Sciatic nerve (tissue), 2 donors: ENCODE measurements at regions of chr5 and their contacts with region 1.

Region 1: DNA sequence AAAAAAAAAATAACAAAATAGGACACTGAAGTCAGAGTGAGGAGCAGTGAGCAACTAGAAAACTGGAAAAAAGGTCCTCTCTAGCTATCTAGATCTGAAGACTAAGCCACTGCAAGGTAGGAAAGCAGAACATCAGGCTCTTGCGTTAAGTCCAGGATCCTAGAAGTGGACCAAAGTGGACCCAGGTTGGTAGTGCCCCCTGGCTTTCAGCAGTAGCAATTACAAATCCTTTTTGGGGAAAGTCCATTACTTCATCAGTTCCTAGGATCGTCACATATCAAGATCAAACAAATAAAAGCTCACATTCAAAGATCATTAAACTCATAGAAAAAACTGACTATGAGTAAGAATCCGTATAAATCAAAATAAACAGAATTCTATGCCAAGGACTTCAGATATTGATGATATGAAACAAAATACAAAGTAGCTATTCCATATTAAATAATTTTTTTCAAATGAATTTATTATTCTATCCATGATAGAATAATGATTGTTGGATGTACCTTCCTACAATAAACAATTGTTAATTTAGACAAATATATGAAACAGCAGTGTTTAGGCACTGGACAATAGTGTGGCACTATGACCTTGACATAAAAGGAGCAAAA is 6.5 kb upstream of the RICTOR start:
- DNase-seq: no peak
- ATAC-seq: peak; percentile 88

Region 2: GRCh38 chr5:38184627-38185026 is 896.1 kb before region 1 on chr5:
- intact Hi-C with region 1: loop called (anchors 5 kb)
- DNase-seq: no peak
- ATAC-seq: no peak

Region 3: DNA sequence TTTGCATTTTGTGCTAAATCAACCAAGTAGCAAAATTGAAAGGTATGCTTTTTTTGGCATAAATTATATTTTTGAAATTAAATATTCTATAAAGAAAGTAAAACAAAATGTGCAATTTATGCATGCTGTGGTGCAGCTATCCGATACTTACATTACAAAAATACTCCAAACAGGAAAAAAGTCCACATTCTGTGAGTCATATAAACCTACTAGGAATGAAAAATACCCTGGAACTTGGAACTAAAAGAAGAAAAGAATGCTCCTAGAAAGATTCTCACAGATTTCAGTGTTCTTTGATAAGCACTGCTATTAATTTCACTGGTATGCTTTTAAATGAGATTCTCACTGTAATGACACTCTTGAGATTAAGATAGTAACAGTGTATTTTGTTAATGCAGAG is 142.3 kb before region 1 on chr5:
- intact Hi-C with region 1: no loop called
- DNase-seq: no peak
- ATAC-seq: no peak